Activated CD4-positive, alpha-beta memory T cell treated with anti-CD3 and anti-CD28 coated beads, Interleukin-2, amount 10 ng/mL, durations not matched to agents 7 days and 5 days (primary cell): ENCODE measurements at regions of chr9 and their contacts with region 1.

Region 1: DNA sequence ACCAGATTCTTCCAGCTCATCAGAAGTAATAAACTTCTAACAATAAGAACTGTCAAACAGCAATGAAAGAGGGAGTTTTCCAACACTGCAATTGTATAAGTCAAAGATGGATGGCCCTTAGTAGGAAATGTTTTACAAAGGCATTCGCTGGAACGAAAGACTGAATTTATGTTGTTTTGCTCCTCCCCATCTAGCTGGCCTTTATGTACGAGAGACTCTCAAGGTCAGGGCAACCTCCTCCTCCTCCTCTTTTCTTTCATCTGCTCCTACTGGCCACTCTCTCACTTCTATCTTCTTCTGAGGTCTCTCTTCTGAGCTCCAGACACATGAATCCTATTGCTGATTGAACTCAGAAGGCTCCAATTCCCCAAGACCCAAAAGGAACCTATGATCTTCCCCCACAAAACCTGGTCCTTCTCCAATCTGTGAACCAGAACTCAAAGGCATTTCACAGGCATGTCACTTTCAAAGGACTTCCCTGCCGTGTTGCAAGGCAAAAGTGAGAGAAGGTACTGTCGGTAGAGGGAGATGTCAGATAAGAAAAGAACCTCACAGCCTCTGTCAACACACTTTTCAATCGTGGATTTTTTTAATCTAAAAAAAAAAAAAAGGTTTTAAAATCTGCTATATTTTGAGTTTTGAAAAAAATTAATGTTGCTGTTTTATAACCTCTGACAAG is 28.5 kb upstream of the PUM3 start:
- DNase-seq: no peak
- H3K4me3 Mint-ChIP-seq: peak overlapping the region; percentile 23
- H3K27ac Mint-ChIP-seq: peak overlapping the region; percentile 72
- H3K4me1 Mint-ChIP-seq: peaks cover 16% of the 10 kb centered on the region
- H3K27me3 Mint-ChIP-seq: peaks cover 43% of the 10 kb centered on the region

Region 2: GRCh38 chr9:3181049-3181953 is 308.9 kb after region 1 on chr9:
- CTCF ChIA-PET with region 1: interaction called, 15 read pairs
- POLR2A ChIA-PET with region 1: no interaction called
- DNase-seq: peak; percentile 44
- H3K4me3 Mint-ChIP-seq: peak overlapping the region; percentile 22
- H3K27ac Mint-ChIP-seq: no peak overlapping the region
- H3K4me1 Mint-ChIP-seq: peaks cover 3% of the 10 kb centered on the region
- H3K27me3 Mint-ChIP-seq: peaks cover 45% of the 10 kb centered on the region